ENCODE measurements at regions of chr19 and their contacts with region 1.

Region 1: DNA sequence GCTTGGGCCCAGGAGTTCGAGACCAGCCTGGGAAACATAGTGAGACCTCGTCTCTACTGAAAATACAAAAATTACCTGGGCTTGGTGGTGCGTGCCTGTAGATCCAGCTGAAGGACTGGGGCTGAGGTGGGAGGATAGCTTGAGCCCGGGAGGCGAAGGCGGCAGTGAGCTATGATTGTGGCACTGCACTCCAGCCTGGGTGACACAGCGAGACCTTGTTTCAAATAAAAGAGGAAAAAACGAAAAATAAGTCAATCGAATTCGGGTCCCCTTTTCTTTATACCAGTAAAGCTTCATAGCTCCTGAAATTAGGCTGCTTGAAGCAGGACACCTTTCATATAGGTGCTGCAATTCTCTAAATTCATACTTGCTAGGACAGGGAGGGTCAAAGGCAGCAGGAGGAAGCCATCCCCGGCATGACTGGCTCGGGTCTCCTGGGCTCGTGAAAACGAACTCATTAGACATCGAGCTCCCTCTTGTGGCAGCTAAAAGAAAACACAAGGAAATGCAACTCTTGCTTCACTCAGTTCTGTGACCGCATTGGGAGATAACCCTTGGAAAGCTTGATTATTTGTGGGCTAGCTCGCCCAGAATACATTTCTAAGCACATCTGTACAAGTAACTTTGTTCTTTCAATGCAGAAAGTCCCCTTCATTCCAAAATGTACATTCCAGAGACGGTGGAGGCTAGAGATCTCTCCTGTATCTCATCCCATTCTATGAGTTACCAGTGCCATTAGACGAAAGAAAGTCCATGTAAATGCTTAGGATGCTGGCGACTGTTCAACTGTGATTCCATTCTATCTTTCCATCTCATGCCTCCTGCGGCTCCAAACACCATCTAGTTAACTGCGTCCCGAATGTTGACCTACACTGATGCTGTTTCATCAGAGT is 16.8 kb downstream of the FPR2 start:
- DNase-seq: peak; percentile 81
- ATAC-seq: peak; percentile 97

Region 2: DNA sequence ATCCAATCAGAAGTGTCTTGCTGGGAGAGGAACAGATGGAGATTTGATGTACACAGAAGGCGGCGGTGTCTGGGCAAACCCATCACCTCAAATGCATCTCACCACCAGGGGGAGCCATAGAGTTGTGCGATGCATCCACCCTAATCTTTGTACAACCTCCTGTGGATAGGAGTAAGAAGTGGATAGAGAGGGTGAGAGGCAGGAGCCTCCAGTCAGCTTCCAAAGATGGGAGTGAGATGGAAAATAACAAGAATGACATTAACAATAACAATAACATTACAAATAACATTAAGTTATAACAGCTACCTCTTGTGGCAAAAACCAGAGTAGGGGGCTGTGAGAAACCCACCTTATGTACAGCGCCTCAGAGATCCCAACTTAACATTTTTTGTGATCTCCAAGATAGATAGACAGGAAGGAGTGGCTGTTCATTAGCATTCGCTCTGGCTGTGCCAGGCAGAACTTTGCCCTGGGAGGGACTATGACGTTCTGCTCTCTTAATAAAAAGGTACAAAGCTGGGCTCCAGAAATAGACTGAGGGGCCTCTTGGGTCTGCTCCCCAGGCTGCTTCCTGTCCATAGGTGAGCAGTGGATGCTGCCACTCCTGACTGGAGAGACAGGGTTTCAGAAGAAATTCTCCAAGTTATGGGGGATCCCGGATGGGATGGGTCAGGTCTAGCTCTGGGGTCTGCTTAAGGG is 304.7 kb before region 1 on chr19:
- intact Hi-C with region 1: loop called (anchors 5 kb)
- DNase-seq: no peak
- ATAC-seq: peak; percentile 60

Region 3: GRCh38 chr19:51570962-51571575 is 206.7 kb before region 1 on chr19 and contains the start of gene ZNF175:
- intact Hi-C with region 1: no loop called
- DNase-seq: peak; percentile 93
- ATAC-seq: peak; percentile 99
- total RNA-seq, gene ZNF175: 7.4 TPM

Region 4: DNA sequence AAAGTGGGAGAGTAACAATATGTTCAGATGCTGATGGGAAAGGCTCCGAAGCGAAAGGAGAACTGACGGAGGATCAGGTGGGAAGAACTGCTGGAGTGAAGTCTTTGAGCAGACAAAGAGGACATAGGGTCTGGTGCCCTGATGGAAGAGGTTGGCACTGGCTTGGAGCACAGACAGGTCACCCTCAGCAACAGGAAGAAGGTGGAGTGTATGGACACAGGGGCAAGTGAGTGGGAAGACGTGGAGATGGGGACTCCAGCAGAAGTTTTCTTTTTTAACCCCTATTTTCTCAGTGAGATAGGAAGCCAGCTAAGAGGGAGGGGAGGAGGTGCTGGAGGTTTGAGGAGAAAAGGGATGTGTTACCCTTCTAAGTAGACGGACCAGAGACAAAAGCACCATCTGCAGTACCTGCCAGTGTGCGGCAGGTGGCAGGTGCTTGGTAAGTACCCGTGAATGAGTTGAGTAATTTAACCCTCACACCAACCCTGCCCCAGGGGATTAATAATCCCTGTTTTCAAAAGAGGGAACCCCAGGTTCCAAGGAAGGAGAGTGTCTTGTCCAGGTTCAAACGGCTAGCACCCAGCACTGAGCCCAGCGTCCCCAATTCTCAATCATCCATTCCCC is 65.2 kb before region 1 on chr19:
- intact Hi-C with region 1: loop called (anchors 5 kb)
- DNase-seq: no peak
- ATAC-seq: no peak

Region 5: DNA sequence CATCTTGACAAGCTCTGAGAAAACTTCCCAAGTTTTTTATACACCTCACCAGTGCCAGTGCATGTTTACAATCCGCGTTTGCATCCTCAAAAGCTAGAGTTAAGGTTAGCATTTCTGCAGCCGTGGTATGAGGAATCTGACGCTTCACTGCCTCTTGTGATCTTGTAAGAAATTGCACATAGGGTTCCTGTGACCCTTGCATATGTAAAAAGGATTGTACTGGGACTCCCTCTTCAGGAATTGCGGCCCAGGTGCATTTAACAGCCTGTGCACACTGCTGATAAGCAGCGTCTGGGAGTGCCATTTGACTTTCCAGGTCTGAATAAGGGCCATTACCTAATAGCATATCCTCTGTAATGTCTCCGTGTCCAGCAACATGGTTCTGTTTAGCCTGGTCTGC is 32.4 kb after region 1 on chr19:
- intact Hi-C with region 1: loop called (anchors 5 kb)
- DNase-seq: no peak
- ATAC-seq: no peak